ENCODE measurements at regions of chr1 and their contacts with region 1.

Region 1: DNA sequence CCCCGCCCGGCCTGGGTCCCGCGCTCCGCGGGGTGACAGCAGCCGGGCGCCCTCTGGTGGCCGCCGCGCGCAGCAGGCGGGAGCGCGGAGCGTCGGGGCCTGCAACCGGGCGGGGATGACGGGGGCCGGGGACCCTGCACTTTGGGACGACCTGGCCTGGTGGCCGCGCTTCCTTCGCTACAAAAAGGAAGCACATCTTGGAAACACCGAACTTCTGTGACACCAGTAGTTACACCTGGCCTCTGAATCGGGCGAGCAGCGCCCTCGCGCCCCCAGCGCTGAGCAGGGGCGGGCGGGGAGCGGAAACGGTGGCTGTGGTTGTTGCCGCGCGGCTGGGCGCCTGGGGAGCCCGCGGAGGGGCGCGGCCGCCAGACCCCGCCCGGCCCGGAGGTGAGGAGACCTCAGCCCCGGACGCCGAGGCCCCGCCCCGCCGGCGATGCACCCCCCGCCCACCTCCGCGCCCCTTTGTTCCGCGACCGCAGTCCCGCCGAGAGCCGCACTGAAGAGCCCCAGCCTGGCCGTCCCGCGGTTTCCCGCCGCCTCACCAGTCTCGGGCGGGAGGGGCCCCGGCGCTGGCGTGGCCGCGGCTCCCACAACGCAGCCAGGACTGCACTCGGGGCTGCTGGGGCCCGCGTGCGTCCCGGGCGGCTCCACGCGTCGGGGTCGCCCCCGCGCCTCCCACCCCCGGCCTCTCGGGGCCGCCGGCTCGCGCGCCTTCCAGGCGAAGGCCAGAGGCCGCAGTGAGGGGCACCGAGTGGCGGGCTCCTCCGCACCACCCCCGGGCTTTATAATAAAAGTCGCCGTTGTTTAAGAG is 59.3 kb downstream of the H3-3A start:
- DNase-seq: peak; percentile 69 to 80
- ATAC-seq: peak; percentile 85 to 94 (median 90)
- H3K4me3 ChIP-seq: peak overlapping the region; percentile 83
- H3K27ac ChIP-seq: peak overlapping the region; percentile 50
- H3K4me1 ChIP-seq: no peaks in the 10 kb centered on the region
- H3K27me3 ChIP-seq: peaks cover 0 to 4% (median 0%) of the 10 kb centered on the region in 3 donors
- CTCF ChIP-seq: peak; percentile 94

Region 2: GRCh38 chr1:226062558-226063223 is 59.1 kb before region 1 on chr1 and contains the start of gene H3-3A:
- intact Hi-C with region 1: loop called (anchors 1 kb)
- DNase-seq: peak; percentile 99 to 100
- ATAC-seq: peak; percentile 90 to 95 (median 92)
- H3K4me3 ChIP-seq: peak within 1 kb of the TSS; percentile 95
- H3K27ac ChIP-seq: peak within 1 kb of the TSS; percentile 99
- H3K4me1 ChIP-seq: peaks cover 34% of the 10 kb centered on the region
- H3K27me3 ChIP-seq: no peaks in the 10 kb centered on the region
- CTCF ChIP-seq: peak; percentile 14
- total RNA-seq, gene H3-3A: 187 to 284 (median 210) TPM

Region 3: DNA sequence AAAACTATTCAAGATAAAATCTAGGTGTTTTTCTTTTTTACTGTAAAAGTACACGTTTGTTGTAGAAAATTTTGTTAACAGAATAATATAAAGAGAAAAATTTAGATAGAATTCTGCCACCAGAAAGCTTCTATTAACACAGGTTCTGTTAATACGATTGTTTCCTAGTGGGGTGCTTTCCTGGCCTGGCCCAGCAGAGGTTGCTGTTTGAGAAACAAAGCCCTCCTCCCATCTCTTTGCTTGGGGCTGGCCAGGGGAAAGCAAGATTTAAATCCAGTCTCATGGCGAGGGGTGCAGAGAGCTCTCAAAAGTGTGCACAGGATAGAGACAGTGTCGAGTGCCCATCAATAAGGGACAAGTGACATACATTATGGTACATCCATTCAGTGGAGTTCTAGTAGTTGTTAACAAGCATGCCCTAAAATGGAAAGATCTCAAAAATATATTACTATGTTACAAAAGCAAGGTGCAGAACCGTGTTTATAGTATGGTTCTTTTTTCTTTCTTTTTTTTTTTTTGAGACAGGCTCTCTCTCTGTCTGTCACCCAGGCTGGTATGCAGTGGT is 79.3 kb after region 1 on chr1:
- intact Hi-C with region 1: loop called in 1 of 2 experiments (anchors 1 kb)
- DNase-seq: no peak
- ATAC-seq: no peak
- H3K4me3 ChIP-seq: no peak overlapping the region
- H3K27ac ChIP-seq: no peak overlapping the region
- H3K4me1 ChIP-seq: no peaks in the 10 kb centered on the region
- H3K27me3 ChIP-seq: no peaks in the 10 kb centered on the region
- CTCF ChIP-seq: no peak